HCT116 (cell line): ENCODE measurements at regions of chr16 and their contacts with region 1.

Region 1: DNA sequence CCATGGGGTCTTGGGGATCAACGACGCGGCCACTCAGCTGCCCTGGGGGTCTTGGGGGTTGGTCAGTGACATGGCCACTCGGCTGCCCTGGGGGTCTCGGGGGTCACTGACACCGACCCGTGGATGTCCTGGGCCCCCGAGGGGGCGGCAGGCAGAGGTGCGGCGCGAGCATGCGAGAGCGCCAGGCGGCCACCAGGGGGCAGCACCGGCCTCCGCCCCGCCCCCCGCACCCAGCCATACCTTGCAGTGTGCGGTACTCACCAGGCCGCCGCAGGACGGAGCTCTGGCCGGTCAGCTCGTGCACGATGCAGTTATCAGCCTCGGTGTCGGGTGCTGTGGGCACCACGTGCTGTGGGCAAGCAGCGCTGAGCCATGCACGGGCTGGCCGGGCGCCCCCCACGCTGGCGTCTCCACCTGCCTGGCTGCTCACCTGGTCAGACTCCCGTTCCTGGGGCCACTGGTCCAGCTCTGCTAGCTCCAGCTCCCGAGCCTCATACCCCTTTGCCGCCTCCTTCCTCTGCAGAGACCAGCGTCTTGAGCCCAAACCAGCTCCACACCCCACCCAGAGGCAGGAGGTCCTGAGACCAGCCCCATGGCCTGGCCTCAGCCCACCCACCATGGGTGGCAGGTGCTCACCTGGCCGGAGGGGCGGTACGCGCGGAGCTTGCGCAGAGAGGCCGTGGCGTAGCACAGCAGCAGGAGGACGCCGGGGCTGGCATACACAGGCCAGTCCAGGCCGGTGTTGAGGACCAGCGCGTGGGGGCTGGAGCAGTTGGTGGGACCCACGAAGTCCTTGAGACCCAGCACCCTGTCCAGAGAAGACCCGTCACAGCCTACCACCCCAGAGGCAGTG is 31.2 kb downstream of the CTU2 start:
- DNase-seq: peak; percentile 48
- ATAC-seq: peak; percentile 90
- H3K4me3 ChIP-seq: no peak overlapping the region
- H3K27ac ChIP-seq: peak overlapping the region; percentile 58; the same call in 1 of the 2 replicates
- H3K4me1 ChIP-seq: peaks cover 0 to 5% of the 10 kb centered on the region in 2 experiments; a peak in 1 of 4 replicates
- H3K27me3 ChIP-seq: no peaks in the 10 kb centered on the region
- CTCF ChIP-seq: peak; percentile 98 to 99 (median 99)
- POLR2A ChIP-seq: no peak
- RAD21 ChIP-seq: peak; percentile 79

Region 2: GRCh38 chr16:88591577-88592021 is 145.9 kb before region 1 on chr16:
- CTCF ChIA-PET with region 1: no interaction called
- POLR2A ChIA-PET with region 1: no interaction called
- RAD21 ChIA-PET with region 1: no interaction called
- intact Hi-C with region 1: no loop called
- DNase-seq: no peak
- ATAC-seq: no peak
- H3K4me3 ChIP-seq: no peak overlapping the region
- H3K27ac ChIP-seq: no peak overlapping the region
- H3K4me1 ChIP-seq: no peaks in the 10 kb centered on the region
- H3K27me3 ChIP-seq: no peaks in the 10 kb centered on the region
- CTCF ChIP-seq: no peak
- POLR2A ChIP-seq: no peak
- RAD21 ChIP-seq: no peak

Region 3: GRCh38 chr16:88754912-88755744 is 17.6 kb after region 1 on chr16:
- CTCF ChIA-PET with region 1: interaction called, 30 read pairs
- POLR2A ChIA-PET with region 1: no interaction called
- RAD21 ChIA-PET with region 1: no interaction called
- intact Hi-C with region 1: no loop called
- DNase-seq: no peak
- ATAC-seq: no peak
- H3K4me3 ChIP-seq: no peak overlapping the region
- H3K27ac ChIP-seq: peak overlapping the region; percentile 15; the same call in 1 of the 2 replicates
- H3K4me1 ChIP-seq: peaks cover 0 to 15% of the 10 kb centered on the region in 2 experiments; a peak in 1 of 4 replicates
- H3K27me3 ChIP-seq: no peaks in the 10 kb centered on the region
- CTCF ChIP-seq: no peak
- POLR2A ChIP-seq: no peak
- RAD21 ChIP-seq: no peak

Region 4: DNA sequence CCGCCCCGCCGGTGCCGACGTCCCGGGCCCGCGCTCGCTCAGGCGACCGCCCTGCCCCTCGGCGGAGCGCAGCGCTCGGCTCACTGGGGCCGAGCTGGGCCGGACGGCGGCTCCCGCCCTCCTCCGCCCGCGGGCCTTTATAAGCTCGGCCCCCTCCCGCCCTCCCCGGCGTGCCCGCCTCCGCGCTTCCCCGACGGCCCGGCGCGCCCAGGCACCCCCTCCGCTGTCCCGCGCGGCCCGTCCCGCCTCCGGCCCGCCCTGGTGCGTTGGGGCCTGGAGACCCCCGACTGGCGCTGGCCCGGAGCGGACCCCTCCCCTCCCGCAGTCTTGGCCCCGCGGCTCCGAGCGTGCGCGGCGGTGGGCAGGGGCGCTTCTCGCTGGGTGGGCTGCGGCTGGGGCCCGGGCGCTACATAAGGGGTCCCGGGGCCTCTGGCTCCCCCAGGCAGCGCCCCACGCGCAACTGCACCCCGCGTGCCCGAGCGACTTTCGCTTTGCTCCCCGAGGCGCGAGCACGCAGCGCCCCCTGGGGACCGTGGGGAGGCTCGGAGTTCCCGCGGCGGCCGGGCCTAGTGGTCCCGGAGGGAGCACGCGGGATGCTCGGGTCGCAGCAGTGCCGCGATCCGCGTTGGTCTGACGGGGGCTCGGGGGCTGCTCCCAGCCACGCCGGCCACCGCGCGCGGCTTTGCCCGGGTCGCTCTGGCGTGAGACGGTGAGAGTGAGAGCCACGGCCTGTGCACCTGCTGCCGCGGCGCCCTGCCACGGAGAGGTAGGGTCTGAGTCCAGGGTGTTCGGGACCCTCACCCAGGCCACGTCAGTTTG is 47.8 kb after region 1 on chr16 and contains the start of gene PIEZO1:
- CTCF ChIA-PET with region 1: interaction called, 59 read pairs
- POLR2A ChIA-PET with region 1: interaction called, 4 read pairs
- RAD21 ChIA-PET with region 1: interaction called, 3 to 4 read pairs
- intact Hi-C with region 1: loop called (anchors 2 kb)
- DNase-seq: no peak
- ATAC-seq: peak; percentile 75
- H3K4me3 ChIP-seq: peak within 1 kb of the TSS; percentile 69 to 82
- H3K27ac ChIP-seq: peak within 1 kb of the TSS; percentile 91
- H3K4me1 ChIP-seq: peaks cover 35 to 46% of the 10 kb centered on the region in 2 experiments
- H3K27me3 ChIP-seq: no peaks in the 10 kb centered on the region
- CTCF ChIP-seq: peak in 2 of 3 experiments; percentile 80 to 92; a peak in 4 of 6 replicates
- POLR2A ChIP-seq: peak; percentile 96
- RAD21 ChIP-seq: no peak
- total RNA-seq, gene PIEZO1: 224 TPM

Region 5: DNA sequence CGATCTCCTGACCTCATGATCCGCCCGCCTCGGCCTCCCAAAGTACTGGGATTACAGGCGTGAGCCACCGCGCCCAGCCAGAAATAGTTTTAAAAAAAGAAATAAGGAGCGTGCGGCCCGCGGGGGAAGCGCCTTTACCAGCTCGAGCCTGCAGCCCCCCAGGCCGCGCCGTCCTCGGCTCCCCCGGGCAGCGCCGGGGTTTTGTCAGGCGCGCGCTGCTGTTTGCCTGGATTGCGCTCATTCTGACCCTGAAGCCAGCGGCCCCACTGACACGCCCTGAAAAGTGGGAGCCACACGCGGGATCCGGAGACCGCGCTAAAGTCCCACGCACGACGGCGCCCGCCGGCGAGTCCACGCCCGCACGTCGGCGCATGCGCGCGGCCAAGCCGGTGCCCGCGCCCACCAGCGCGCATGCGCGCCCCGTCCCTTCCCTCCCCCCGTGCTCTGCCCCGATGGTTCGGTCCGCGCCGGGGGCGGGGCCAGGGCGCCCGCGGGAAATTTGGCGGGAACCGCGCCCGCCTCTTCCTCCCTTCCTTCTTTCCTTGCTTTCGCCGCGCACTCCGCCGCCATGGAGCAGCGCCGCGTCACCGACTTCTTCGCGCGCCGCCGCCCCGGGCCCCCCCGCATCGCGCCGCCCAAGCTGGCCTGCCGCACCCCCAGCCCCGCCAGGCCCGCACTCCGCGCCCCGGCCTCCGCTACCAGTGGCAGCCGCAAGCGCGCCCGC is 65.9 kb after region 1 on chr16 and contains the start of gene CDT1:
- CTCF ChIA-PET with region 1: interaction called, 33 read pairs
- POLR2A ChIA-PET with region 1: interaction called, 5 read pairs
- RAD21 ChIA-PET with region 1: no interaction called
- intact Hi-C with region 1: loop called (anchors 5 kb)
- DNase-seq: peak; percentile 61
- ATAC-seq: peak; percentile 42
- H3K4me3 ChIP-seq: peak within 1 kb of the TSS; percentile 85 to 99
- H3K27ac ChIP-seq: peak within 1 kb of the TSS; percentile 100
- H3K4me1 ChIP-seq: peaks cover 16 to 43% of the 10 kb centered on the region in 2 experiments
- H3K27me3 ChIP-seq: no peaks in the 10 kb centered on the region
- CTCF ChIP-seq: no peak
- POLR2A ChIP-seq: peak; percentile 76
- RAD21 ChIP-seq: no peak
- total RNA-seq, gene CDT1: 160 TPM

Region 6: GRCh38 chr16:88856828-88857733 is 119.6 kb after region 1 on chr16 and contains the starts of genes GALNS and TRAPPC2L:
- CTCF ChIA-PET with region 1: interaction called, 10 read pairs
- POLR2A ChIA-PET with region 1: interaction called, 4 read pairs
- RAD21 ChIA-PET with region 1: no interaction called
- intact Hi-C with region 1: no loop called
- DNase-seq: peak; percentile 90
- ATAC-seq: peak; percentile 87
- H3K4me3 ChIP-seq: peak within 1 kb of the TSS; percentile 89 to 100
- H3K27ac ChIP-seq: peak within 1 kb of the TSS; percentile 82
- H3K4me1 ChIP-seq: peaks cover 19 to 26% of the 10 kb centered on the region in 2 experiments
- H3K27me3 ChIP-seq: no peaks in the 10 kb centered on the region
- CTCF ChIP-seq: no peak
- POLR2A ChIP-seq: peak; percentile 89
- RAD21 ChIP-seq: no peak
- total RNA-seq, gene GALNS: 44.6 TPM
- total RNA-seq, gene TRAPPC2L: 94.1 TPM

Region 7: GRCh38 chr16:89044421-89045180 is 307.1 kb after region 1 on chr16:
- CTCF ChIA-PET with region 1: no interaction called
- POLR2A ChIA-PET with region 1: no interaction called
- RAD21 ChIA-PET with region 1: no interaction called
- intact Hi-C with region 1: no loop called
- DNase-seq: no peak
- ATAC-seq: no peak
- H3K4me3 ChIP-seq: no peak overlapping the region
- H3K27ac ChIP-seq: no peak overlapping the region
- H3K4me1 ChIP-seq: no peaks in the 10 kb centered on the region
- H3K27me3 ChIP-seq: peaks cover 13% of the 10 kb centered on the region; the same call in 1 of the 2 replicates
- CTCF ChIP-seq: no peak
- POLR2A ChIP-seq: no peak
- RAD21 ChIP-seq: no peak